HepG2 (cell line): ENCODE measurements at regions of chr15 and their contacts with region 1.

Region 1: GRCh38 chr15:58307313-58307961 is 124.4 kb upstream of the LIPC start:
- DNase-seq: no peak
- ATAC-seq: no peak
- H3K4me3 ChIP-seq: no peak overlapping the region
- H3K27ac ChIP-seq: peak overlapping the region; percentile 50
- H3K4me1 ChIP-seq: peaks cover 32% of the 10 kb centered on the region
- H3K27me3 ChIP-seq: no peaks in the 10 kb centered on the region
- CTCF ChIP-seq: no peak
- EP300 ChIP-seq: no peak
- POLR2A ChIP-seq: no peak
- RAD21 ChIP-seq: no peak

Region 2: DNA sequence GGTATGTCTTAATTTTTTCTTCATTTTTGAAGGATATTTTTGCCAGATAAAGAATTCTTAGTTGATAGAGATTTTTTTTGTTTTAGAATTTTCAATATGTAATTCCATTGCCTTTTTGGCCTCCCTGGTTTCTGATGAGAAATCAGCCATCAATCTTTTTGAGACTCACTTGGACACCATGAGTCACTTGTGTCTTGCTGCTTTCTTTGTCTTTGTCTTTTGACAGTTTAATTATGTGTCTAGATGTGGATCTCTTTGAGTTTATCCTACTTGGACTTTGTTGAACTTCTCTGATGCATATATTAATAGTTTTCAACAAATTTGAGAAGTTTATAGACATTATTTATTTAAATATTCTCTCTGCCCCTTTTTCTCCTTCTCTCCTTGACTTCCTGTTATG is 204.0 kb before region 1 on chr15:
- CTCF ChIA-PET with region 1: no interaction called
- POLR2A ChIA-PET with region 1: no interaction called
- in situ Hi-C with region 1: no loop called
- intact Hi-C with region 1: no loop called
- DNase-seq: no peak
- ATAC-seq: no peak
- H3K4me3 ChIP-seq: no peak overlapping the region
- H3K27ac ChIP-seq: no peak overlapping the region
- H3K4me1 ChIP-seq: no peaks in the 10 kb centered on the region
- H3K27me3 ChIP-seq: no peaks in the 10 kb centered on the region
- CTCF ChIP-seq: no peak
- EP300 ChIP-seq: no peak
- POLR2A ChIP-seq: no peak
- RAD21 ChIP-seq: no peak

Region 3: DNA sequence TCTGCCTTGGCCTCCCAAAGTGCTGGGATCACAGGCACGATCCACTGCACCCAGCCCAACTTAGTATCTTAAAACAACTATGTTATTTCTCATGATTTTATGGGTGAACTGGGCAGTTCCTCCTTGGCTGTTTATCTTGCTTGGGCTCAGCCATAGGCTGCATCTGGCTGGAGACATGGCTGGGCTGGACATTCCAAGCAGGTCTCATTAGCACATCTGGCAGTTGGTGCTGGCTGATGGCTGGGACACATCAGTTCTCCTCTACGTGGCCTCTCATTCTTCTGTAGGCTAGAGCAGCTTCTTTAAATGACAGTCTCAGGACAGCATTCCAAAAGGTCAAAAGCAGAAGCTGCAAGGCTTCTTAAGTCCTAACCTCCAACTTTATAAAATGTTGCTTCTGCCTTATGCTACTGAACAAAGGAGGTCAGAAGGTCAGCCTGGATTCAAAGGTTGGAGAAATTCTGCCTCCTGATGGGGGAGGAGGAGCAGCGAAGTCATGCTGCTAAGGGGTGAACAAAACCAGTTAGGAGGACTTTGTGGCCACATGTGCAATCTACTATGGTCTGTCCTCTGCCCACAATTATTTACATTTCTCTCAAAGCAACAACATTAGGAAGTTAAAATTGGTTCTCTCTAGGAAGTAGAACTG is 25.3 kb before region 1 on chr15:
- CTCF ChIA-PET with region 1: no interaction called
- POLR2A ChIA-PET with region 1: interaction called, 10 read pairs
- in situ Hi-C with region 1: no loop called
- intact Hi-C with region 1: no loop called
- DNase-seq: peak; percentile 58
- ATAC-seq: peak; percentile 30
- H3K4me3 ChIP-seq: no peak overlapping the region
- H3K27ac ChIP-seq: peak overlapping the region; percentile 78
- H3K4me1 ChIP-seq: peaks cover 56% of the 10 kb centered on the region
- H3K27me3 ChIP-seq: no peaks in the 10 kb centered on the region
- CTCF ChIP-seq: peak; percentile 38
- EP300 ChIP-seq: peak in 1 of 2 experiments; percentile 83; a peak in 2 of 4 replicates
- POLR2A ChIP-seq: no peak
- RAD21 ChIP-seq: no peak